Activated CD4-positive, alpha-beta T cell treated with anti-CD3 and anti-CD28 coated beads, Interleukin-2, amount 10 ng/mL, durations not matched to agents 24 days and 14 days (primary cell): ENCODE measurements at regions of chr13 and their contacts with region 1.

Region 1: GRCh38 chr13:98672944-98673545 is 79.4 kb downstream of the SLC15A1 start:
- DNase-seq: peak; percentile 83
- H3K4me3 Mint-ChIP-seq: no peak overlapping the region
- H3K27ac Mint-ChIP-seq: no peak overlapping the region
- H3K4me1 Mint-ChIP-seq: no peaks in the 10 kb centered on the region
- H3K27me3 Mint-ChIP-seq: peaks cover 17% of the 10 kb centered on the region

Region 2: DNA sequence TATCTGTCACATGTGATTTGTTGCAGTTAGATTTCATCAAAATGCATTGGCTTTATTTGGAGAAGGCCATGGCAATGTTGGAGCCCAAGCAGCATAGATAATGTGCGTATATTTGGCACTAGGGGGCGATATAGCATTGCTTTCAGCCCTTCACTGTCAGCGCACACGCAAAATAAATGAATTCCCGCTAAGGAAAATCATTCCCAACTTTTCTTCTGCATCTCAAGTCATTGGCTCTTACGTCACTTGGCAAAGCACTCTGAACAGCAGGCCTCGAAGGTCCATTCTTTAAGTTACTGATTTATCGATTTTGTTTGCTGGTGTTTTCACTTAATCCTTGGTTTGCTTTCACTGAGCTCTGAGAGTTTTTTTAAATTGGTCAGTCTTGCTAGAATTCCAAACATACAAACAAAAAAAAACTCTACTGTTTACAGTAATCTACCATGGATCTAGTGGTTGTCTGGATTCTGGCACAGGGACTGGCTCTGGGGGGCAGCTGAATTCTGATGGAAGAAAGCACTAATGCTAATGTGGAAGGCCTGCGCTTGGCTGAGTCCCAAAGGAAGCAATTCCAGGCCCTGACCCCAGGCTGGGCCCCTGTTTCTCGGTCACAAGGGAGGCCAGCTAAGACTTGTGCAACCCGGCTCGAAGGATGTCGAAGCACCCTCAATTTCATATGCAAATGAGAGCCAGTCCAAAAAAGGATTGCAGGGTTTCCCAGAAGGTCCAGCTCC is 817.3 kb before region 1 on chr13:
- intact Hi-C with region 1: loop called (anchors 1 kb)
- DNase-seq: peak; percentile 73
- H3K4me3 Mint-ChIP-seq: no peak overlapping the region
- H3K27ac Mint-ChIP-seq: no peak overlapping the region
- H3K4me1 Mint-ChIP-seq: no peaks in the 10 kb centered on the region
- H3K27me3 Mint-ChIP-seq: peaks cover 2% of the 10 kb centered on the region

Region 3: GRCh38 chr13:98445340-98446233 is 227.5 kb before region 1 on chr13:
- intact Hi-C with region 1: loop called (anchors 1 kb)
- DNase-seq: peak; percentile 92
- H3K4me3 Mint-ChIP-seq: no peak overlapping the region
- H3K27ac Mint-ChIP-seq: peak overlapping the region; percentile 65
- H3K4me1 Mint-ChIP-seq: peaks cover 11% of the 10 kb centered on the region
- H3K27me3 Mint-ChIP-seq: no peaks in the 10 kb centered on the region

Region 4: DNA sequence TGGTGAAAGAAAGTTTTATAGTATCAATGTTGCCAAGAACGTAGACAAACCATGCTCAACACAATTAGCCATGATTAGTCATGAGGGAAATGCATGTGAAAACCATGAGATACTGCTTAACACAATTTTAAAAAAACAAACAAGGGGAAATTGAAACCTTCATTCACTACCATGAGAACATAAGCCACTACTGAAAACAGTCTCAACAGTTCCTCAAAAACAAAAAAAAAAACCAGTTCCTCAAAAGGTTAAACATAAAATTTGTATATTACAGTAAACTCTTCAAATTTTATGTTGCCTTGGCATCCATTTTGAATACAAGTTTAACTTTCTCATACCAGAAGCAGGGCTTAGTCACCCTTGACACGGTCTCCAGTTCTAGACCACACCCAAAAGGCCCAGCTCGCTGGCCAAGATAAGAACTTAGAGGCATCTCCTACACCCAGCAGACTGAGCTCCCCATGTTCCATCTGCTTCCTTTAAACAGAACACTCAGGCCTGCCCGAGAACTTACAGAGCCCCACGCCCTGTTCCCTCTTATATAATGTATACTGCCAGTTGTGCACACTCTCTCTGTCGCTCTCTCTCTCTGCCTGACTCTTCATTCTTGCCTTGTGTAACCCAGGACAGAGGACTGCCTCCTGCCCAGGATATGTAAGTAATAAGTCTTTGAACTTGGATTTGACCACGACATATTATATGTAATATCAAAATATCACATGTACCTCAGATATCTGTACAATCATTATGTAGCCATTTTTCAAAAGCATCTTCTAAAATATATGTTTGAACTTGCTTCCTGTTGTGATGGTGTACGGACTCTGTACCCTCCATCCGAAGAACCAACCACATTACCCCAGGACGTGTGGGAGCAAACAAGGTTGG is 163.5 kb before region 1 on chr13:
- intact Hi-C with region 1: no loop called
- DNase-seq: peak; percentile 80
- H3K4me3 Mint-ChIP-seq: peak overlapping the region; percentile 54
- H3K27ac Mint-ChIP-seq: peak overlapping the region; percentile 89
- H3K4me1 Mint-ChIP-seq: peaks cover 74% of the 10 kb centered on the region
- H3K27me3 Mint-ChIP-seq: no peaks in the 10 kb centered on the region

Region 5: GRCh38 chr13:98842864-98843481 is 169.9 kb after region 1 on chr13:
- intact Hi-C with region 1: loop called (anchors 5 kb)
- DNase-seq: peak; percentile 88
- H3K4me3 Mint-ChIP-seq: no peak overlapping the region
- H3K27ac Mint-ChIP-seq: no peak overlapping the region
- H3K4me1 Mint-ChIP-seq: peaks cover 7% of the 10 kb centered on the region
- H3K27me3 Mint-ChIP-seq: no peaks in the 10 kb centered on the region